ENCODE measurements at regions of chr9 and their contacts with region 1.

Region 1: GRCh38 chr9:93111371-93112115 is 15.5 kb downstream of the CARD19 start:
- DNase-seq: peak; percentile 94
- H3K4me3 Mint-ChIP-seq: no peak overlapping the region
- H3K27ac Mint-ChIP-seq: peak overlapping the region; percentile 77
- H3K4me1 Mint-ChIP-seq: peaks cover 21% of the 10 kb centered on the region
- H3K27me3 Mint-ChIP-seq: no peaks in the 10 kb centered on the region
- CTCF ChIP-seq: no peak

Region 2: GRCh38 chr9:92954049-92954861 is 157.3 kb before region 1 on chr9:
- CTCF ChIA-PET with region 1: interaction called, 6 read pairs
- POLR2A ChIA-PET with region 1: no interaction called
- intact Hi-C with region 1: loop called (anchors 2 kb)
- DNase-seq: peak; percentile 85
- H3K4me3 Mint-ChIP-seq: peak overlapping the region; percentile 52
- H3K27ac Mint-ChIP-seq: peak overlapping the region; percentile 71
- H3K4me1 Mint-ChIP-seq: peaks cover 21% of the 10 kb centered on the region
- H3K27me3 Mint-ChIP-seq: no peaks in the 10 kb centered on the region
- CTCF ChIP-seq: no peak

Region 3: GRCh38 chr9:93003552-93004407 is 107.8 kb before region 1 on chr9:
- CTCF ChIA-PET with region 1: interaction called, 33 read pairs
- POLR2A ChIA-PET with region 1: interaction called, 3 read pairs
- intact Hi-C with region 1: loop called (anchors 1 kb)
- DNase-seq: peak; percentile 69
- H3K4me3 Mint-ChIP-seq: no peak overlapping the region
- H3K27ac Mint-ChIP-seq: no peak overlapping the region
- H3K4me1 Mint-ChIP-seq: no peaks in the 10 kb centered on the region
- H3K27me3 Mint-ChIP-seq: no peaks in the 10 kb centered on the region
- CTCF ChIP-seq: peak; percentile 67

Region 4: GRCh38 chr9:93066978-93067603 is 44.5 kb before region 1 on chr9:
- CTCF ChIA-PET with region 1: interaction called, 11 read pairs
- POLR2A ChIA-PET with region 1: no interaction called
- intact Hi-C with region 1: no loop called
- DNase-seq: no peak
- H3K4me3 Mint-ChIP-seq: no peak overlapping the region
- H3K27ac Mint-ChIP-seq: no peak overlapping the region
- H3K4me1 Mint-ChIP-seq: no peaks in the 10 kb centered on the region
- H3K27me3 Mint-ChIP-seq: no peaks in the 10 kb centered on the region
- CTCF ChIP-seq: no peak

Region 5: GRCh38 chr9:93095205-93096130 is 16.1 kb before region 1 on chr9:
- CTCF ChIA-PET with region 1: interaction called, 35 read pairs
- POLR2A ChIA-PET with region 1: interaction called, 10 read pairs
- intact Hi-C with region 1: no loop called
- DNase-seq: peak; percentile 98
- H3K4me3 Mint-ChIP-seq: peak overlapping the region; percentile 78
- H3K27ac Mint-ChIP-seq: peak overlapping the region; percentile 82
- H3K4me1 Mint-ChIP-seq: peaks cover 33% of the 10 kb centered on the region
- H3K27me3 Mint-ChIP-seq: no peaks in the 10 kb centered on the region
- CTCF ChIP-seq: no peak

Region 6: GRCh38 chr9:93154315-93154903 is 42.9 kb after region 1 on chr9:
- CTCF ChIA-PET with region 1: interaction called, 8 read pairs
- POLR2A ChIA-PET with region 1: interaction called, 3 read pairs
- intact Hi-C with region 1: loop called (anchors 1 kb)
- DNase-seq: peak; percentile 54
- H3K4me3 Mint-ChIP-seq: no peak overlapping the region
- H3K27ac Mint-ChIP-seq: no peak overlapping the region
- H3K4me1 Mint-ChIP-seq: no peaks in the 10 kb centered on the region
- H3K27me3 Mint-ChIP-seq: no peaks in the 10 kb centered on the region
- CTCF ChIP-seq: peak; percentile 62

Region 7: DNA sequence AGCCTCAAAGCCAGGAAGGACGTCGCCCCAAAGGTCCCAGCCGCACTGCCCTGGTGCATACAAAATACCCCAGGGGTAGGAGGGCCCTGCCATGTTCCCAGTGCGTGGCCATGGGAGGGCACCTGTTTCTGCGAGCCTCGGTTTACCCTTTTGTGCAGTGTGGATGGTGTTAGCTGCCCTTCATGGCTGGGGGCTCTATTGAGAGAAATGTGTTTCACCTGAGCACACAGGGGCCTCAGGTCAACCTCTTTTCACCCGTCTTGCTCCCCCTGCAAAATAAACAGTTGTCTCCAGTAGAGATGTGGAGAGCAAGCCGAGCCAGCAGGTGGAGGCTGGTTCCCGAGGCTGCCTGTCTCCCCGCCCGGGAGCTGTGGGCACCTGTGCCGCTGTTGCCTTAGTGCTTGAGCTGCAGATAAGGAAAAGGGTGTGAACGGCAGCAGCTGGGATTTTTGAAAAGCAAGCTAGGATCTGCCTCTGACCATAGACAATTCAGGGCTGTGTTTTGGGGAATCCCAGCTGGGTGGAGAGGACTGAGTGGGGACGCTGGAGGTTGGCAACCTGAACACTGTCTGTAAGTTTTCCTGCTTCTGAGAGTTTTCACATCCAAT is 81.7 kb after region 1 on chr9:
- CTCF ChIA-PET with region 1: no interaction called
- POLR2A ChIA-PET with region 1: no interaction called
- intact Hi-C with region 1: no loop called
- DNase-seq: no peak
- H3K4me3 Mint-ChIP-seq: no peak overlapping the region
- H3K27ac Mint-ChIP-seq: no peak overlapping the region
- H3K4me1 Mint-ChIP-seq: no peaks in the 10 kb centered on the region
- H3K27me3 Mint-ChIP-seq: peaks cover 13% of the 10 kb centered on the region
- CTCF ChIP-seq: no peak

Region 8: GRCh38 chr9:93302551-93303257 is 191.2 kb after region 1 on chr9:
- CTCF ChIA-PET with region 1: interaction called, 12 read pairs
- POLR2A ChIA-PET with region 1: no interaction called
- intact Hi-C with region 1: no loop called
- DNase-seq: peak; percentile 69
- H3K4me3 Mint-ChIP-seq: no peak overlapping the region
- H3K27ac Mint-ChIP-seq: no peak overlapping the region
- H3K4me1 Mint-ChIP-seq: no peaks in the 10 kb centered on the region
- H3K27me3 Mint-ChIP-seq: no peaks in the 10 kb centered on the region
- CTCF ChIP-seq: peak; percentile 54